Transverse colon (tissue), 4 donors: ENCODE measurements at regions of chr17 and their contacts with region 1.

Region 1: DNA sequence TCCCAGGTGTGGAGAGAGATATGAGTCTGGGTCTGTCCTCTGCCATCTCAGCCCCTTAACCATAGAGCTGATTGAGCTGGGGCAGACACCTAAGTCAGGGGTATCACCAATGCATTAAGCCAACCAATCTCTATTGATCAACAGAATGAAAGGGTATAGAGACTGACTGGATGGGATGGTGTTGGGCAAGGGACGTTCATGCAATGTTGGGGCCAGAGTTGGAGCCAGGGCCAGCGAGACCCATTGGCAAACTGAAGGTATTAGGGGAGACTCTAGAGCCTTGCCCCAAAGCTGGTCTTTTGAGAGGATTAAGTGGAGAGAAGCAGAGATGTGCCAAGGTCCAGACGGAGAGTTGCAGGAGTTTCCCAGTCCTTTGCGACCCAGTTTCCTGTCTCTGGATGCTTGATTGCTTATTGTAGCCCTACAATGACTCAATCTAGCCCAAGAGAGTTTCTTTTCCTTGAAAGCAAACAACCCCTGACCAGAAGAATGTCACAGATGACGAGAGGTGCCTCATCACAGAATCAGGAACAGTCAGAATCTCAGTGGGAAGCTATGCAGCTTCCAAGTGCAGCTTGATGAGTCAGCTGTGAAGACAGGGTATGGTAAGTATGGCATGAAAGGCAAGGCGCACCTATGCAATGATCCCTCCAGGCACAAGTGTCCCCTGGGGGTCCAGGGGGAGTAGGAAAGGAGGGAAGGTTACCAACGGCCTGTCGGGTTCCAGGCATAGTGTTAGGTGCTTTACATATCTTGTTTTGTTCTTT is 137.2 kb downstream of the UTP18 start:
- DNase-seq: no peak
- H3K4me3 ChIP-seq: no peak overlapping the region
- H3K27ac ChIP-seq: no peak overlapping the region
- H3K4me1 ChIP-seq: no peaks in the 10 kb centered on the region
- H3K27me3 ChIP-seq: no peaks in the 10 kb centered on the region
- CTCF ChIP-seq: no peak
- EP300 ChIP-seq: no peak
- POLR2A ChIP-seq: no peak

Region 2: GRCh38 chr17:51487947-51488346 is 90.4 kb after region 1 on chr17:
- in situ Hi-C with region 1: loop called in 1 of 4 experiments (anchors 25 kb)
- intact Hi-C with region 1: no loop called
- DNase-seq: no peak
- H3K4me3 ChIP-seq: no peak overlapping the region
- H3K27ac ChIP-seq: no peak overlapping the region
- H3K4me1 ChIP-seq: no peaks in the 10 kb centered on the region
- H3K27me3 ChIP-seq: no peaks in the 10 kb centered on the region
- CTCF ChIP-seq: no peak
- EP300 ChIP-seq: no peak
- POLR2A ChIP-seq: no peak